ENCODE measurements at regions of chr16 and their contacts with region 1.

Region 1: GRCh38 chr16:16861546-16861945 is 482.6 kb downstream of the NPIPA7 start:
- DNase-seq: peak; percentile 49
- H3K4me3 ChIP-seq: no peak overlapping the region
- H3K27ac ChIP-seq: no peak overlapping the region
- H3K4me1 ChIP-seq: no peaks in the 10 kb centered on the region
- H3K27me3 ChIP-seq: peaks cover under 1% of the 10 kb centered on the region
- CTCF ChIP-seq: peak; percentile 67 to 80 (median 70)
- EP300 ChIP-seq: no peak
- POLR2A ChIP-seq: no peak

Region 2: DNA sequence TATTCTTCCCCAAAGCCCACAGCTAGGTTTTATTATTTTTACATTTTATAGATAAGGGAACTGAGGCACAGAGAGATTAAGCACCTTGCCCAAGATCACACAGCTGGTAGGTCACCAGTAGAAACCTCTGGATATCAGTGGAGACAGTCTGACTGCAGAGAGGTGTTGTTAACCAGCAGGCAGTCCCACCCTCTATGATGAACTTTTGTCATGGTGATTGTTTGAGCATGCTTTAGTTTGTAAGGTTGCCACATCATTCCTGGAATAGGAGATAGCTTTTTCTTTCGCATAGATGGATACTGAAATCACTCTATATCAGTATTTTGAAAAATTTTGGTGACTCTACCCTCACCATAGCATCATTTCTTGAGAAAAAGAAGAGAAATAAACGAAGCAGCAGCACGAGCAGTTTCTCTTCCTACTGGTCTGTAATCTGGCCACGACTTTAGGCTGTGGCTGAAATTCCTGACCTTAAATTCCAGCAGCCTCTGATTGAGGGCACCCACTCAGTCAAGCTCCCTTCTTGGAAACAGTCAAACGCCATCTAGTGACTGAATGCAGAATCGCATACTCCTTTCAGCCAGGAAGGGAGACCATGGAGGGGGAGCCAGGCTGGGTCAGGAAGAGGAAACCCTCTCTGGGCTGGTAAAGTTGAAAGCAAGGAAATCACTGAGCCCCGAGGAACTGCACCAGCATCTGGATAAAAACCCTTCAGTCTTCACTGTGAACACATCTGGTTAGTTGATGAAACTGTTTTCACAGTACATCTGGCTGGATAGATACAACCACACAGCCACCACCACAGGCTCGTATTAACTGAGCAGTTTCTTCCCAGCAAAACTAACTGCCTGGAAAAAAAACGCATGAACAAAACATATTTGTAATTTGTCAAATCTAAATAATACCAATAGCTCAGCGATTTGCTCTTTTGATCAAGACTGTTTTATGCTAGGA is 717.7 kb after region 1 on chr16:
- in situ Hi-C with region 1: loop called in 2 of 4 experiments (anchors 25 kb)
- intact Hi-C with region 1: no loop called
- DNase-seq: peak; percentile 66
- H3K4me3 ChIP-seq: no peak overlapping the region
- H3K27ac ChIP-seq: no peak overlapping the region
- H3K4me1 ChIP-seq: peaks cover 0 to 6% (median 0%) of the 10 kb centered on the region in 4 donors
- H3K27me3 ChIP-seq: peaks cover 6% of the 10 kb centered on the region
- CTCF ChIP-seq: peak; percentile 78 to 87 (median 85)
- EP300 ChIP-seq: no peak
- POLR2A ChIP-seq: no peak

Measured in transverse colon (tissue), 4 donors.